ENCODE measurements at regions of chr6 and their contacts with region 1.

Region 1: GRCh38 chr6:26553635-26554446 is 15.7 kb downstream of the HMGN4 start:
- DNase-seq: peak; percentile 51 to 91 (median 73)
- ATAC-seq: peak; percentile 35
- H3K4me3 ChIP-seq: peak overlapping the region; percentile 64 to 70
- H3K4me3 Mint-ChIP-seq: no peak overlapping the region
- H3K27ac ChIP-seq: peak overlapping the region; percentile 17 to 60
- H3K27ac Mint-ChIP-seq: no peak overlapping the region
- H3K4me1 ChIP-seq: peaks cover 28% of the 10 kb centered on the region
- H3K4me1 Mint-ChIP-seq: peaks cover 21% of the 10 kb centered on the region
- H3K27me3 ChIP-seq: no peaks in the 10 kb centered on the region
- H3K27me3 Mint-ChIP-seq: no peaks in the 10 kb centered on the region
- CTCF ChIP-seq: no peak

Region 2: DNA sequence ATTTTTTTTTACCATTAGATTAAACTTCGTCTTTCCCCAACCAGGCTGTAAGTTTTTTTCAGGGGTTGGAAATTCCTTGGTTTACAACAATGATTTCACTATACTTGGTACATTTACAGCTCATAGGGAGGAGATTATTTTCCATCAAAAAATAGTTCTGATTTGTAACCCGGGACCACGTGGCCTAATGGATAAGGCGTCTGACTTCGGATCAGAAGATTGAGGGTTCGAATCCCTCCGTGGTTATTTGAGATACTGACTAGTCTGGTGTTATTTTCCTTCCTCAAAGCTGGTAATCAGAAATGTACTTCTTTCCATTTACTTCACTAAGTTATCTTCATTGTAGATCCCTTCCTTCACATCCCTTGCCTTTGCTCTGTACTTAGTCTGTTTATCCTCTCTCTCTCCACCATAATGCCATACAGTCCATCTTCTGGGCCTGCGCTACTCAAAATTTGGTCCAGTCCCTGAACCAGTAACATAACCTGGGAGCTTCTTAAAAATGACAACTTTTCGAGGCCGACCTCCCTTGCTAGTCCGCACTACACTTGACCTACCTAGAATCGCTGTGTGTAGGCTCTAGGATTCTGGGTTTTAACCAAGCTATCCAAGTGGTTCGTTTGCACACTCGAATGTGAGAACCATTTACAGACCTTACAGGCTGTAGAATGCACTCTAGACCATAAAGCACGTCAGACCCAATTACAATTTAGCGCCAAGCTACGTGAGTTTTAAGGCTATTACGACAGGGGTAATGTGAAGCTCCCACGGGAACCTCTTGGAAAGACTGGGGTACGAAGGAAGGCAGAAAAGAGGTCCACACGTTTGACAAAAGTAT is 231.0 kb before region 1 on chr6:
- CTCF ChIA-PET with region 1: interaction called, 3 read pairs
- POLR2A ChIA-PET with region 1: interaction called, 5 read pairs
- intact Hi-C with region 1: loop called in 1 of 2 experiments (anchors 10 kb)
- DNase-seq: peak in 8 of 9 experiments; percentile 32 to 86 (median 58)
- ATAC-seq: peak; percentile 65
- H3K4me3 ChIP-seq: peak overlapping the region; percentile 55 to 64
- H3K4me3 Mint-ChIP-seq: peak overlapping the region; percentile 88
- H3K27ac ChIP-seq: no peak overlapping the region
- H3K27ac Mint-ChIP-seq: peak overlapping the region; percentile 90
- H3K4me1 ChIP-seq: peaks cover 5% of the 10 kb centered on the region
- H3K4me1 Mint-ChIP-seq: peaks cover 24% of the 10 kb centered on the region
- H3K27me3 ChIP-seq: peaks cover 0 to 2% of the 10 kb centered on the region in 2 experiments
- H3K27me3 Mint-ChIP-seq: peaks cover 15% of the 10 kb centered on the region
- CTCF ChIP-seq: no peak

Region 3: GRCh38 chr6:26473758-26474438 is 79.9 kb before region 1 on chr6:
- CTCF ChIA-PET with region 1: interaction called, 3 read pairs
- POLR2A ChIA-PET with region 1: interaction called, 13 read pairs
- intact Hi-C with region 1: no loop called
- DNase-seq: peak; percentile 63 to 96 (median 79)
- ATAC-seq: peak; percentile 93
- H3K4me3 ChIP-seq: peak overlapping the region; percentile 64 to 75
- H3K4me3 Mint-ChIP-seq: peak overlapping the region; percentile 93
- H3K27ac ChIP-seq: peak overlapping the region; percentile 82 to 98
- H3K27ac Mint-ChIP-seq: peak overlapping the region; percentile 99
- H3K4me1 ChIP-seq: peaks cover 39% of the 10 kb centered on the region
- H3K4me1 Mint-ChIP-seq: peaks cover 50% of the 10 kb centered on the region
- H3K27me3 ChIP-seq: no peaks in the 10 kb centered on the region
- H3K27me3 Mint-ChIP-seq: no peaks in the 10 kb centered on the region
- CTCF ChIP-seq: no peak

Region 4: DNA sequence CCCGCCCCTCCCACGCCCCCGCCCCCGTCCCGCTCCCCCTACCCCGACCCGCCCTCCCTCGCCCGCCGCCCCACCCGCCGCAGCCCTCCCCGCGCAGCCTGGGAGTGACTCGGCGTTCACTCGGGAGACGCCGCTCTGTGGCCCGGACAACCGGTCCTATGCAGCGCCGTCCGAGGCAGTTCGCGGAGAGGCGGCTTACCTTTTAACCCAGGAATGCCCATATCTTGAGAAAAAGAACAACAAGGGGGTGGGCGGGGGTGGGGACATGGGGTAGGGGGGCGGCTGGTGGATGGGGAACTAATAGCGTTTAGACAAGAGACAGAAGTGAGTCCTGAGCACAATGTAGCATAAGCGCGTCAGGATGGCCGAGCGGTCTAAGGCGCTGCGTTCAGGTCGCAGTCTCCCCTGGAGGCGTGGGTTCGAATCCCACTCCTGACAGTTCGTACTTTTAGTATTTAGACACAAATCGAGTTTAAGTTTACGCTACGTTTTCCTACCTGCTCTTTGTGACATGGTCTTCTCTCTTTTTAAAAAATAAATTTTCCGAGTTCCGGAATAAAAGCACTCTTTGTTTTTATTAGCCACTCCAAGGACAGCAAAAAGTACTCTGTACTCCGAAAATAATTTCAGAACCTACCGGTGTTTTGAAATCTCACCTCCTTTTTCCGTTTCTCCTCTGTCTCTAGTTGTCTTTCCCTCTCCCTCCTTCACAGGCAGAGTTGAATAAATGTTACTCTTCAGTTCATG is 32.8 kb before region 1 on chr6:
- CTCF ChIA-PET with region 1: no interaction called
- POLR2A ChIA-PET with region 1: interaction called, 3 read pairs
- intact Hi-C with region 1: loop called (anchors 1 to 2 kb)
- DNase-seq: peak; percentile 69 to 94 (median 86)
- ATAC-seq: peak; percentile 80
- H3K4me3 ChIP-seq: peak overlapping the region; percentile 50 to 57
- H3K4me3 Mint-ChIP-seq: peak overlapping the region; percentile 83
- H3K27ac ChIP-seq: peak overlapping the region; percentile 35 to 86
- H3K27ac Mint-ChIP-seq: peak overlapping the region; percentile 83
- H3K4me1 ChIP-seq: peaks cover 8% of the 10 kb centered on the region
- H3K4me1 Mint-ChIP-seq: peaks cover 31% of the 10 kb centered on the region
- H3K27me3 ChIP-seq: no peaks in the 10 kb centered on the region
- H3K27me3 Mint-ChIP-seq: no peaks in the 10 kb centered on the region
- CTCF ChIP-seq: no peak

Region 5: GRCh38 chr6:26537846-26538571 is 15.8 kb before region 1 on chr6 and contains the start of gene HMGN4:
- CTCF ChIA-PET with region 1: interaction called, 11 read pairs
- POLR2A ChIA-PET with region 1: interaction called, 54 read pairs
- intact Hi-C with region 1: loop called (anchors 1 kb)
- DNase-seq: peak; percentile 65 to 96 (median 79)
- ATAC-seq: peak; percentile 69
- H3K4me3 ChIP-seq: peak within 1 kb of the TSS; percentile 66 to 99
- H3K4me3 Mint-ChIP-seq: peak within 1 kb of the TSS; percentile 89
- H3K27ac ChIP-seq: peak within 1 kb of the TSS; percentile 88 to 93
- H3K27ac Mint-ChIP-seq: peak within 1 kb of the TSS; percentile 92
- H3K4me1 ChIP-seq: peaks cover 32% of the 10 kb centered on the region
- H3K4me1 Mint-ChIP-seq: peaks cover 58% of the 10 kb centered on the region
- H3K27me3 ChIP-seq: no peaks in the 10 kb centered on the region
- H3K27me3 Mint-ChIP-seq: no peaks in the 10 kb centered on the region
- CTCF ChIP-seq: no peak
- total RNA-seq, gene HMGN4: 24.8 to 33.7 TPM

Region 6: GRCh38 chr6:26596579-26597388 is 42.9 kb after region 1 on chr6 and contains the start of gene ABT1:
- CTCF ChIA-PET with region 1: interaction called, 10 read pairs
- POLR2A ChIA-PET with region 1: no interaction called
- intact Hi-C with region 1: loop called in 1 of 2 experiments (anchors 5 kb)
- DNase-seq: peak; percentile 94 to 99 (median 97)
- ATAC-seq: peak; percentile 85
- H3K4me3 ChIP-seq: peak within 1 kb of the TSS; percentile 93 to 94
- H3K4me3 Mint-ChIP-seq: no peak within 1 kb of the TSS
- H3K27ac ChIP-seq: peak within 1 kb of the TSS; percentile 90 to 94
- H3K27ac Mint-ChIP-seq: no peak within 1 kb of the TSS
- H3K4me1 ChIP-seq: peaks cover 18% of the 10 kb centered on the region
- H3K4me1 Mint-ChIP-seq: peaks cover 23% of the 10 kb centered on the region
- H3K27me3 ChIP-seq: peaks cover 0 to 4% of the 10 kb centered on the region in 2 experiments
- H3K27me3 Mint-ChIP-seq: peaks cover 10% of the 10 kb centered on the region
- CTCF ChIP-seq: no peak
- total RNA-seq, gene ABT1: 42.5 to 44.2 TPM

Region 7: DNA sequence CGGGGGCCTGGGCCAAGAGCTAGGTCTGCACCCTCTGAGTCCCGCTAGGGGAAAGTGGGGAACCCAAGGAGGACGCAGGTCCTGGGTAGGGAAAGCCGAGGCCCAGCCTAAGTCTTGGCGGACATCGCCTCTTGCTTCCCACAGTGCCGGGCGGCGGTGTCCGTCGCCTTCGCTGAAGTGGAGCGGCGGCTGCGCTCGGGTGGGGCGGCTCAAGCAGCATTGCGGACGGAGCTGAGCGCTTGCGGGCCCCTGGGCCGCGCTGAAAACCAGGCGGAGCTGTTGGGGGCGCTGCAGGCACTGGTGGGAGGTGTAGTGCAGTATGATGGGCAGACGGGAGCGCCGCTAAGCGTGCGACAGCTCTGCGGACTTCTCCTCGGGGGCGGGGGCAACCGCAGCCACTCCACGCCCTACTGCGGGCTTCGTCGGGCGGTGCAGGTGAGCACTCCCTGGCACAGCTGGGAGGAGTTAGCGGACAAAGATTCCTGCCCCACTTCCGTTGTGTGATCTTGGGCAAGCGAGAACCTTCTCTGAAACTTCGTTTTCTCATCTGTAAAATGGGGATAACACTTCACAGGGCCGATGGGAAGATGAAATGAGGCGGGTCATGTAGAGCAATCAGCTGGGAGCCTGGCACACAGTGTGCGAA is 697.9 kb after region 1 on chr6:
- CTCF ChIA-PET with region 1: no interaction called
- POLR2A ChIA-PET with region 1: no interaction called
- intact Hi-C with region 1: no loop called
- DNase-seq: peak; percentile 18 to 87 (median 63)
- ATAC-seq: peak; percentile 91
- H3K4me3 ChIP-seq: peak overlapping the region; percentile 24 to 71
- H3K4me3 Mint-ChIP-seq: peak overlapping the region; percentile 86
- H3K27ac ChIP-seq: no peak overlapping the region
- H3K27ac Mint-ChIP-seq: no peak overlapping the region
- H3K4me1 ChIP-seq: peaks cover 12% of the 10 kb centered on the region
- H3K4me1 Mint-ChIP-seq: peaks cover 15% of the 10 kb centered on the region
- H3K27me3 ChIP-seq: peaks cover 17 to 19% of the 10 kb centered on the region in 2 experiments
- H3K27me3 Mint-ChIP-seq: peaks cover 55% of the 10 kb centered on the region
- CTCF ChIP-seq: peak; percentile 21

Measured in CD8-positive, alpha-beta T cell (primary cell).